ENCODE measurements at regions of chr1 and their contacts with region 1.

Region 1: GRCh38 chr1:154272217-154272998 is at the start of gene HAX1:
- DNase-seq: peak; percentile 100
- ATAC-seq: peak; percentile 92
- H3K4me3 Mint-ChIP-seq: peak within 1 kb of the TSS; percentile 99
- H3K27ac Mint-ChIP-seq: peak within 1 kb of the TSS; percentile 99
- H3K4me1 Mint-ChIP-seq: peaks cover 47% of the 10 kb centered on the region
- H3K27me3 Mint-ChIP-seq: no peaks in the 10 kb centered on the region
- CTCF ChIP-seq: peak; percentile 85
- total RNA-seq, gene HAX1: 163 to 170 TPM

Region 2: GRCh38 chr1:154198756-154199562 is 73.4 kb before region 1 on chr1:
- CTCF ChIA-PET with region 1: interaction called, 38 read pairs
- POLR2A ChIA-PET with region 1: interaction called, 6 read pairs
- intact Hi-C with region 1: loop called (anchors 5 kb)
- DNase-seq: peak; percentile 65
- ATAC-seq: peak; percentile 82
- H3K4me3 Mint-ChIP-seq: no peak overlapping the region
- H3K27ac Mint-ChIP-seq: no peak overlapping the region
- H3K4me1 Mint-ChIP-seq: no peaks in the 10 kb centered on the region
- H3K27me3 Mint-ChIP-seq: peaks cover 3% of the 10 kb centered on the region
- CTCF ChIP-seq: peak; percentile 69

Region 3: DNA sequence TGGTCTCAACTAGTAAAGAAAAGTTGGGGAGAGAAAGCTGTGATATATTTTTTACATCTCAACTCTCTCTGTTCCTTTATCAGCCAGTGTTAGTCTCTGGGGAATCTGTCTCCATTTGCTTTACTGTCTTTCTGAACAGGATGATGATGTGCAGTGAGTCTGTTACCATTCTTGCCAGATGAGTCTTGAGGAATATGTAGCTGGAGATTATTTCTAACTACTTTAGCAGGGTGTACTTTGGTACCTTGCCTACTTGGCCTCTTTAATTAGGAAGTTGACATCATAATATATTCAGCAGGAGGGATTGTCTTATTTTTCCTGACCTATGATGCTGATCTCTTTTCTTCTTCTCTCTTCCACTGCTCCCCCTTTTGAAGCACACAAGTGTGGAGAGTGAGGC is 15.7 kb before region 1 on chr1:
- CTCF ChIA-PET with region 1: interaction called, 20 read pairs
- POLR2A ChIA-PET with region 1: interaction called, 9 read pairs
- intact Hi-C with region 1: no loop called
- DNase-seq: no peak
- ATAC-seq: no peak
- H3K4me3 Mint-ChIP-seq: no peak overlapping the region
- H3K27ac Mint-ChIP-seq: peak overlapping the region; percentile 23
- H3K4me1 Mint-ChIP-seq: peaks cover 2% of the 10 kb centered on the region
- H3K27me3 Mint-ChIP-seq: no peaks in the 10 kb centered on the region
- CTCF ChIP-seq: no peak